Natural killer cell (primary cell): ENCODE measurements at regions of chr12 and their contacts with region 1.

Region 1: GRCh38 chr12:49842519-49843352 is at the start of gene BCDIN3D:
- DNase-seq: peak; percentile 83 to 96
- ATAC-seq: peak; percentile 93 to 96 (median 95)
- H3K4me3 ChIP-seq: peak within 1 kb of the TSS; percentile 85
- H3K4me3 Mint-ChIP-seq: peak within 1 kb of the TSS; percentile 94
- H3K27ac ChIP-seq: peak within 1 kb of the TSS; percentile 78
- H3K27ac Mint-ChIP-seq: peak within 1 kb of the TSS; percentile 89 to 90
- H3K4me1 ChIP-seq: peaks cover 24% of the 10 kb centered on the region
- H3K4me1 Mint-ChIP-seq: peaks cover 33 to 36% of the 10 kb centered on the region in 2 donors
- H3K27me3 ChIP-seq: no peaks in the 10 kb centered on the region
- H3K27me3 Mint-ChIP-seq: peaks cover 0 to 1% of the 10 kb centered on the region in 2 donors
- CTCF ChIP-seq: no peak
- total RNA-seq, gene BCDIN3D: 4.0 to 6.0 (median 4.4) TPM

Region 2: GRCh38 chr12:49636979-49637755 is 205.6 kb before region 1 on chr12:
- intact Hi-C with region 1: loop called (anchors 2 kb)
- DNase-seq: peak; percentile 34 to 76
- ATAC-seq: peak; percentile 76 to 98 (median 94)
- H3K4me3 ChIP-seq: no peak overlapping the region
- H3K4me3 Mint-ChIP-seq: no peak overlapping the region
- H3K27ac ChIP-seq: no peak overlapping the region
- H3K27ac Mint-ChIP-seq: peak overlapping the region in 1 of 2 donors; percentile 29
- H3K4me1 ChIP-seq: peaks cover 25% of the 10 kb centered on the region
- H3K4me1 Mint-ChIP-seq: peaks cover 20 to 25% of the 10 kb centered on the region in 2 donors
- H3K27me3 ChIP-seq: no peaks in the 10 kb centered on the region
- H3K27me3 Mint-ChIP-seq: no peaks in the 10 kb centered on the region
- CTCF ChIP-seq: peak; percentile 67

Region 3: GRCh38 chr12:49662998-49663843 is 179.5 kb before region 1 on chr12:
- intact Hi-C with region 1: no loop called
- DNase-seq: peak; percentile 51 to 90
- ATAC-seq: peak; percentile 89 to 96 (median 91)
- H3K4me3 ChIP-seq: peak overlapping the region; percentile 1
- H3K4me3 Mint-ChIP-seq: peak overlapping the region; percentile 80
- H3K27ac ChIP-seq: peak overlapping the region; percentile 86
- H3K27ac Mint-ChIP-seq: peak overlapping the region; percentile 93 to 95
- H3K4me1 ChIP-seq: peaks cover 44% of the 10 kb centered on the region
- H3K4me1 Mint-ChIP-seq: peaks cover 60 to 70% of the 10 kb centered on the region in 2 donors
- H3K27me3 ChIP-seq: no peaks in the 10 kb centered on the region
- H3K27me3 Mint-ChIP-seq: no peaks in the 10 kb centered on the region
- CTCF ChIP-seq: no peak

Region 4: DNA sequence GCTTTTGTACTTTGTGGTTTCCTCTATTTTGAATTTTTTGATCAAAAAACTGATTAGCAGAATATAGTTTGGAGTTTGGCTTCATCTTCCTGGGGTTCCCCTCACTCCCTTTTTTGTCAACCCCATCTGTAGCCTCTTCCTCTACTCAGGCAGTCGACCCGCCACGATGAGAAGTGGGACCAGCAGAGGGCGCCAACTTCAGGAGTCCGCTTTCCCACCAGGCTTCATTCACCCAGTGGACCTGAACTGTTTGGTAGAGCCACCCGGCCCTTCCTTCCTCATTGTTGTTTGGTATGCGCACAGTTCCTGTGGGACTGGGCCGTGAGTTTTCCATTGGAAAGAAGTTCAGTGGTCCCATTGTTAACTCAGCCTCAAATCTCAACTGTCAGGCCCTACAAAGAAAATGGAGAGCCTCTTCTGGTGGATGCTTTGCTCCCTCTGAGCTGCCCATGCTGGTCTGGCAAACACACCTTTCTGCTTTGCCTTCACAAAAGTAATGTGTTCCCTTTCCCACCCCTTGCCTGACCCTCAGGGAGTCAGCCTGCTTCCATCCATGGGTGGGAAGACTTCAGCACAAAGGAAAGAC is 79.6 kb before region 1 on chr12:
- intact Hi-C with region 1: loop called (anchors 2 kb)
- DNase-seq: peak; percentile 74 to 90
- ATAC-seq: peak; percentile 85 to 92 (median 88)
- H3K4me3 ChIP-seq: no peak overlapping the region
- H3K4me3 Mint-ChIP-seq: peak overlapping the region; percentile 6
- H3K27ac ChIP-seq: peak overlapping the region; percentile 40
- H3K27ac Mint-ChIP-seq: peak overlapping the region; percentile 80 to 88
- H3K4me1 ChIP-seq: peaks cover 21% of the 10 kb centered on the region
- H3K4me1 Mint-ChIP-seq: peaks cover 38 to 40% of the 10 kb centered on the region in 2 donors
- H3K27me3 ChIP-seq: no peaks in the 10 kb centered on the region
- H3K27me3 Mint-ChIP-seq: no peaks in the 10 kb centered on the region
- CTCF ChIP-seq: peak; percentile 82

Region 5: DNA sequence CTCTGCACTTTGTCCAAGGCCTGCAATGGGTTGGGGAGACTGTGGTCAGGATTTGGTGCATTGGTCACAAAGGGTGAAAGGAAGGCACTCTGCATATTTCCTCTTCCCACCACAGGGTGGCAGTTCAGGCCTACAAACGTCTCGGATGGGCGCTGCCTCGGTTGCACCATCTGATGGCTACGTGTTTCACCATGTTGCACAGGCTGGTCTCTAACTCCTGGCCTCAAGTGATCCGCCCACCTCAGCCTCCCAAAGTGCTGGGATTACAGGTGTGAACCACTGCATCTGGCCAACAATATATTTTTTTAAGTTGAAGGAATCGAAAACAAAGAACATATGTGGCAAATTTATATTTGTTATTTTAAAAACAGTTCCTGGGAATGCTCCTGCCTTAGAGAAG is 66.3 kb before region 1 on chr12:
- intact Hi-C with region 1: loop called (anchors 1 kb)
- DNase-seq: peak; percentile 35 to 74
- ATAC-seq: peak; percentile 65 to 83 (median 83)
- H3K4me3 ChIP-seq: no peak overlapping the region
- H3K4me3 Mint-ChIP-seq: no peak overlapping the region
- H3K27ac ChIP-seq: no peak overlapping the region
- H3K27ac Mint-ChIP-seq: no peak overlapping the region
- H3K4me1 ChIP-seq: peaks cover 14% of the 10 kb centered on the region
- H3K4me1 Mint-ChIP-seq: peaks cover 19 to 22% of the 10 kb centered on the region in 2 donors
- H3K27me3 ChIP-seq: no peaks in the 10 kb centered on the region
- H3K27me3 Mint-ChIP-seq: peaks cover 14 to 17% of the 10 kb centered on the region in 2 donors
- CTCF ChIP-seq: peak; percentile 44

Region 6: DNA sequence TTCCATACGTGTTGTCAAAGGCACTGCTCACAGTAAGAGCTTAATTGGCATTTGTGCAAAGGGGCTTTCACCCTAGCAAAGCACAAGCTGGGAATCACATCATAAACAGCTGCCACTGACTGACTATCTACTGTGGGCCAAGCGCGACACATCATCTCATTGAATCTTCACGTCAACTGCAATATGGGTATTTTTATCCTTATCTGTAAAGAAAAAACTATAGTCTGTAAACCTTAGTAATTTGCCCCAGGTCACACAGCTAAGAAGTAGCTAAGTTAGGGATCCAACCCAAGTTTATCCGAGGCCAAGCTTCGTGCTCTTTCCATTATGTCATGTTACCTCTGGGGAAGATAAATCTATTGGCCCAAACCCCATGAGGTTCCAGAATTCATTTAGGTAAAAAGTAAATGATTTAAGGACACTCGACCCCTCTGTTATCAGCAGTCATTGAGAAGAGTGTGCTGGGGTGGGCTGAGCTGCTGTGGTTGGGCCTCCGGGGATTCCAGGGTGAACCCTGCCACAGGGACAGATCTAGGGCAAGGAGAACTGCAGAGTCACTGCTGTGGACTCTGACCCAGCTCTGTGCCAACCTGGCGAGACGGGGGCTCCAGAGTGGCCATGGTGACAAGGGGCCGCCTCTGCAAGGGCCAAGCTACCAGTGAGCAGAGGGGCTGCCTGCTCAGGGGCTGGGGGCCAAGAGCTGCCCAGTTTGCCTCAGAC is 42.2 kb before region 1 on chr12:
- intact Hi-C with region 1: no loop called
- DNase-seq: no peak
- ATAC-seq: no peak
- H3K4me3 ChIP-seq: no peak overlapping the region
- H3K4me3 Mint-ChIP-seq: no peak overlapping the region
- H3K27ac ChIP-seq: no peak overlapping the region
- H3K27ac Mint-ChIP-seq: no peak overlapping the region
- H3K4me1 ChIP-seq: no peaks in the 10 kb centered on the region
- H3K4me1 Mint-ChIP-seq: no peaks in the 10 kb centered on the region
- H3K27me3 ChIP-seq: no peaks in the 10 kb centered on the region
- H3K27me3 Mint-ChIP-seq: no peaks in the 10 kb centered on the region
- CTCF ChIP-seq: no peak

Region 7: GRCh38 chr12:49828133-49829091 is 14.3 kb before region 1 on chr12 and contains the start of gene NCKAP5L:
- intact Hi-C with region 1: loop called (anchors 1 kb)
- DNase-seq: peak; percentile 90 to 96
- ATAC-seq: peak; percentile 95 to 98 (median 96)
- H3K4me3 ChIP-seq: peak within 1 kb of the TSS; percentile 48
- H3K4me3 Mint-ChIP-seq: peak within 1 kb of the TSS; percentile 93
- H3K27ac ChIP-seq: peak within 1 kb of the TSS; percentile 39
- H3K27ac Mint-ChIP-seq: peak within 1 kb of the TSS; percentile 85 to 86
- H3K4me1 ChIP-seq: peaks cover 41% of the 10 kb centered on the region
- H3K4me1 Mint-ChIP-seq: peaks cover 22 to 34% of the 10 kb centered on the region in 2 donors
- H3K27me3 ChIP-seq: no peaks in the 10 kb centered on the region
- H3K27me3 Mint-ChIP-seq: peaks cover 0 to 8% of the 10 kb centered on the region in 2 donors
- CTCF ChIP-seq: no peak
- total RNA-seq, gene NCKAP5L: 16.7 to 19.3 (median 16.8) TPM